ENCODE measurements at regions of chr14 and their contacts with region 1.

Region 1: DNA sequence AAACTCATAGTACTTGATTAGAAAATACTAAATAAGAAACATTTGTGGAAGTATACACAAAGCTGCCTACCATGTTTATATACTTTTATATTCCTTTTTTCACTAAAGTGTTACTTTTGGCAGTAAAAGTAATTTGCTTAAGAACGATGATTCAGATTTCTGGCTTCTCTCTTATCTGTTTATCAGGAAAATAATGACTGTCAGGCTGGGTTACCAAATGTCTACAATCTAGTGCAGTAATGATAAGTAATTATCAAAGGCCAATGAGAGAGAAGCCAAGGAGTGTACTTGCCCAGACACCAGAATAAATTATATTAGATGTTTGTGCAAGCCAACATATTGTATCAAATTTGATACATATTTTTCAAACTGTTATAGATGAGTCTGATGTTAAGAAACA is 113.4 kb downstream of the RALGAPA1 start:
- DNase-seq: no peak
- H3K4me3 ChIP-seq: no peak overlapping the region
- H3K27ac ChIP-seq: no peak overlapping the region
- H3K4me1 ChIP-seq: no peaks in the 10 kb centered on the region
- CTCF ChIP-seq: no peak

Region 2: DNA sequence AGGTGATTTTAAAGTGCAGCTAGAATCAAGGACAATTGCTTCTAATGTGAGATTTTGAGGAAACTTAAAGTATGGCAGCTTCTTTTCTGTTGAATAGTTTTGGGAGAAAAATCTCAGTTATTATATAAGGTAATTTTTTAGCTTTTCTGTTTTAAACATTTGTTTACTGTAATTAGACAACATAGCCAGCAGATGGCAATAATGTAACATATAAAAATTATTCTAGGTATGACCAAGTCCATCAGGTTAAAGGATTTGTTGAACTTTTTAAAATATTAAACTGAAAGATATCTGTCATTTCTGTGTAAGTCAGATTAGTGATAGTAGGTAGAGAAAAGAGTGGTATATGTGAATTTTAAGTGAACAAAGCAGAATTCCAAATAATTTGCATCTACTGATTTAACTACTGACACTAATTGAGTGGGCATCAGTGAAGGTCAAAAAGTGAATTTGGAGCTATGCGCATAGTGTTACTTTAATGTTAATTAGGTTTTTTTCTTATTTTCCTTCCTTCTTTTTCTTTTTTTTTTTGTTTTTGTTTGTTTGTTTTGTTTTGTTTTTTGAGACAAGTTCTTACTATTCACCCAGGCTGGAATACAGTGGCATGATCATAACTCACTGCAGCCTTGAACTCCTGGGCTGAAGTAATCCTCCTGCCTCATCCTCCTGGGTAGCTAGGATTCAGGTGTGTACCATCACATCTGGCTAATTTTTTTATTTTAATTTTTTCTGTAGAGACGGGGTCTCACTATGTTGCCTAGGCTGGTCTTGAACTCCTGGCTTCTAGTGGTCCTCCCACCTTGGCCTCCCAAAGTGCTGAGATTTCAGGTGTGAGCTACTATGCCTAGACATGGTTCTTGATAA is 554.7 kb before region 1 on chr14:
- CTCF ChIA-PET with region 1: no interaction called
- POLR2A ChIA-PET with region 1: no interaction called
- intact Hi-C with region 1: loop called (anchors 10 kb)
- DNase-seq: peak; percentile 59
- H3K4me3 ChIP-seq: no peak overlapping the region
- H3K27ac ChIP-seq: no peak overlapping the region
- H3K4me1 ChIP-seq: no peaks in the 10 kb centered on the region
- CTCF ChIP-seq: peak; percentile 88